HAP-1 (cell line): ENCODE measurements at regions of chr10 and their contacts with region 1.

Region 1: GRCh38 chr10:13659897-13660550 is 73.3 kb downstream of the PRPF18 start:
- DNase-seq: peak in 1 of 2 experiments; percentile 73
- H3K4me3 ChIP-seq: no peak overlapping the region
- H3K4me1 ChIP-seq: no peaks in the 10 kb centered on the region
- H3K27me3 ChIP-seq: no peaks in the 10 kb centered on the region

Region 2: DNA sequence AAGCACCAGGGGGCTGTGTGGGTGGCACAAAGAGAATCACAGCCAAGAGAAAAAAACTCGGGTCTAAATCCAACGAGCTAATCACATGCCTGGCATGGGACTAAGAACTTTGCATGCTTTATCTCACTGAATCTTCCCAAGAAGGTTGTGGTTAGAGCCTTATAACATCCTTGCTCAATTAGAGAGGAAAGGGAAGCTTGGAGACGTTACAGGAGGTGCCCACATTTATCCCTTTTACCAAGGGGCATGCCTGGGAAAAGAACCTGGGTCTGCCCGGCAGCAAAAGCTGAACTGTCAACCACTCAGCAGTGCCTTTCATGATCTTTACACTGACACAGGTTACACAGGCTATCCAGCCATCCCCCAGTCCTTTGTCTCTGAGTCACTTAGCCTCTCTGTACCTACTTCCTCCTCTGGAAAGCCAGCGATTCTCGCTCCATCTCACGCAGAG is 116.9 kb after region 1 on chr10:
- in situ Hi-C with region 1: loop called (anchors 10 kb)
- DNase-seq: no peak
- H3K4me3 ChIP-seq: no peak overlapping the region
- H3K4me1 ChIP-seq: no peaks in the 10 kb centered on the region
- H3K27me3 ChIP-seq: no peaks in the 10 kb centered on the region